ENCODE measurements at regions of chrX and their contacts with region 1.

Region 1: GRCh38 chrX:18377796-18378195 is 23.3 kb upstream of the SCML2 start:
- DNase-seq: peak; percentile 65
- H3K4me3 ChIP-seq: no peak overlapping the region
- H3K27ac ChIP-seq: no peak overlapping the region
- H3K4me1 ChIP-seq: no peaks in the 10 kb centered on the region
- H3K27me3 ChIP-seq: no peaks in the 10 kb centered on the region
- CTCF ChIP-seq: peak; percentile 78

Region 2: DNA sequence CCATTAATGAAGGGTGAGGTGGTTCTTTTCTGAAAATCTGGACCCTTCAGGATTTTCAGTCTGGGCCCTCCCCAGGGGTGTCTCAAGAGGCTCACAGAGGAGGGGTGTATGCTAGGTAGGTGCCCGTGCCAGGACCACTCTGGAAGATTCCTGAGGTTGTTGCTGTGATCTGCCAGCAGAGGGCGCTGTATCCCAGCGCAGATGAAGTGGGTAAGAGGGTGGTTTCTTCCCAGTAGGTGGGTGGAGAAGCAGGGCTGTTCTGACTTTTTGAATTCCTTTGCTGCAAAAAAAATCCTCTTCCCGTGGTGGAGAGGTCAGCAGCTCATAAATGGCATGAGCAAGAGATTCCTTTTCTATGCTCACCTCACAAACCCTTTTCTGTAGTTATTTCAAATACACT is 589.4 kb before region 1 on chrX:
- CTCF ChIA-PET with region 1: no interaction called
- POLR2A ChIA-PET with region 1: no interaction called
- intact Hi-C with region 1: loop called (anchors 10 kb)
- DNase-seq: peak; percentile 61
- H3K4me3 ChIP-seq: no peak overlapping the region
- H3K27ac ChIP-seq: no peak overlapping the region
- H3K4me1 ChIP-seq: no peaks in the 10 kb centered on the region
- H3K27me3 ChIP-seq: no peaks in the 10 kb centered on the region
- CTCF ChIP-seq: peak; percentile 89

Region 3: DNA sequence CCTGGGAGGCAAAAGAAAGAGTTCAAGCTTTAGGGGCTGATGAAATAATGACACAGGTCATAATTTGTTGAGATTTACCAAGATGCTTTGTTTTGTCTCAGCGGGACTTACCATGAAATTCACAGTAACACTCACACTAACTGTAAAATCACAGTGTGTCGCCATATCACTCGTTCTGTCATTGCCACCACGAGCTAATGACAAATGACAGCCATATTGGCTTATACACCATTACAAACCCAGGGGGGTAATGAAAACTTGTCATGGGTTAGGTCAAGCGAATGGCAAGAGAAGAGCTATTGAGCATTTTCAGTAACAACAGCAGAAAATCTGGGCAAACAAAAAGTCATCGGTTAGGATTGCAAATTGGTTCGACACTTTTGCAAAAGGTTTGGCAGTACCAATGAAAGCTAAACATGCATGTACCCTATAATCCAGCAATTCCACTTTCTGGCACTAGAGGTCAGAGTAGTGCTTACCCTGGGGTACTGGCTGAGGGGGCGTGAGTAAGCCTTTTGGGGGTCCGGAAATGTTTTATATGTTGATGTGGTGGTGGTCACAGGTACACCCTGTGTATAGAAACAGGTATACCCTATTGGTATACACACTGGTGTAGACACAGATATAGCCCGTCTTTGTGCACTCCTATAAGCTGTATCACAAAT is 432.8 kb before region 1 on chrX:
- CTCF ChIA-PET with region 1: no interaction called
- POLR2A ChIA-PET with region 1: no interaction called
- intact Hi-C with region 1: loop called (anchors 5 kb)
- DNase-seq: peak; percentile 57
- H3K4me3 ChIP-seq: no peak overlapping the region
- H3K27ac ChIP-seq: no peak overlapping the region
- H3K4me1 ChIP-seq: no peaks in the 10 kb centered on the region
- H3K27me3 ChIP-seq: no peaks in the 10 kb centered on the region
- CTCF ChIP-seq: peak; percentile 82

Measured in A673 (cell line).